Caco-2 (cell line): ENCODE measurements at regions of chr12 and their contacts with region 1.

Region 1: DNA sequence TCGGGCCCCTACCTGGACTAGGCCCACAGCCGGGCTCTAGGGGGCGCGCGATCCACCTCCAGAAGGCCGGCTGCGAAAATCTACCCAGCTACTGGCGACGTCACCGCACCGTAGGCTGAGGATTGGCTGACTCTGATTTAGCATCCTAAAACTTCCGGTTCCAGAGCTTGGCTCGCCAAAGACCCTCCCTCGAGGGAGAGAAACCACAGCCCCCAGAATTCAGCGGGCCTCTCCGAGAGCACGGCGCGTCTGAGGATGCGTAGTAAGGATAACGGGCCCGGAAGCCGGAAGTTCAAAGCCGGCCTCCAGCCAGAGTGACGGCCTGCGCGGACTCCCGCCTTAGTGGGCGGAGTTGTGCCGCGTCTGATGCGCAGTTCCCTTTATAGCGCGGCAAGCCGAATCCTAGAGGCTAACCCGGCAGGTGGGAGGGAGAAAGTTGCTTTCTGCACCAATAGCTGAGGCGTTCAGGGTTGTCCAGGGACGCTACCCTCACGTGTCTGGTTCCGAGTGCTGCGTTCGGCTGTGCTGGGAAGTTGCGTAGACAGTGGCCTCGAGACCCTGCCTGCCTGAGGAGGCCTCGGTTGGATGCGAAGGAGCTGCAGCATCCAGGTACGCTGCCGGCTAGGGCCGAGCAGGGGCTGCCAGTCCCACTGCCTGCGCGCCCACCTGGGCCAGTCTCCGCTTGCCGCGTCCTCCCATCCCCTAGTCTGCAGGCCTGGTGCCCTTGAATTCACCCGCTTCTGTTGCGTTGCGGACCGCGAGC is at the start of gene COX14:
- DNase-seq: peak; percentile 100
- H3K4me3 ChIP-seq: peak within 1 kb of the TSS; percentile 80
- H3K4me3 Mint-ChIP-seq: peak within 1 kb of the TSS; percentile 100
- H3K27ac Mint-ChIP-seq: peak within 1 kb of the TSS; percentile 97
- H3K4me1 ChIP-seq: peaks cover 24% of the 10 kb centered on the region
- H3K4me1 Mint-ChIP-seq: peaks cover 17% of the 10 kb centered on the region
- H3K27me3 ChIP-seq: no peaks in the 10 kb centered on the region
- H3K27me3 Mint-ChIP-seq: no peaks in the 10 kb centered on the region
- CTCF ChIP-seq: peak; percentile 94 to 97
- total RNA-seq, gene COX14: 85.0 and 86.3 TPM in 2 replicates

Region 2: GRCh38 chr12:49809381-49809905 is 302.4 kb before region 1 on chr12:
- CTCF ChIA-PET with region 1: no interaction called
- POLR2A ChIA-PET with region 1: no interaction called
- intact Hi-C with region 1: no loop called
- DNase-seq: no peak
- H3K4me3 ChIP-seq: no peak overlapping the region
- H3K4me3 Mint-ChIP-seq: no peak overlapping the region
- H3K27ac Mint-ChIP-seq: no peak overlapping the region
- H3K4me1 ChIP-seq: no peaks in the 10 kb centered on the region
- H3K4me1 Mint-ChIP-seq: no peaks in the 10 kb centered on the region
- H3K27me3 ChIP-seq: no peaks in the 10 kb centered on the region
- H3K27me3 Mint-ChIP-seq: no peaks in the 10 kb centered on the region
- CTCF ChIP-seq: no peak

Region 3: GRCh38 chr12:49967042-49967776 is 144.7 kb before region 1 on chr12:
- CTCF ChIA-PET with region 1: interaction called, 14 read pairs
- POLR2A ChIA-PET with region 1: no interaction called
- intact Hi-C with region 1: no loop called
- DNase-seq: peak; percentile 88 to 92
- H3K4me3 ChIP-seq: peak overlapping the region; percentile 18
- H3K4me3 Mint-ChIP-seq: peak overlapping the region; percentile 34
- H3K27ac Mint-ChIP-seq: peak overlapping the region; percentile 33
- H3K4me1 ChIP-seq: peaks cover 20% of the 10 kb centered on the region
- H3K4me1 Mint-ChIP-seq: no peaks in the 10 kb centered on the region
- H3K27me3 ChIP-seq: no peaks in the 10 kb centered on the region
- H3K27me3 Mint-ChIP-seq: no peaks in the 10 kb centered on the region
- CTCF ChIP-seq: peak; percentile 94 to 98

Region 4: GRCh38 chr12:50084775-50085614 is 26.9 kb before region 1 on chr12 and contains the start of gene SMARCD1:
- CTCF ChIA-PET with region 1: interaction called, 105 read pairs
- POLR2A ChIA-PET with region 1: interaction called, 30 read pairs
- intact Hi-C with region 1: loop called (anchors 1 kb)
- DNase-seq: peak; percentile 97
- H3K4me3 ChIP-seq: peak within 1 kb of the TSS; percentile 72
- H3K4me3 Mint-ChIP-seq: peak within 1 kb of the TSS; percentile 83
- H3K27ac Mint-ChIP-seq: peak within 1 kb of the TSS; percentile 79
- H3K4me1 ChIP-seq: peaks cover 44% of the 10 kb centered on the region
- H3K4me1 Mint-ChIP-seq: peaks cover 37% of the 10 kb centered on the region
- H3K27me3 ChIP-seq: no peaks in the 10 kb centered on the region
- H3K27me3 Mint-ChIP-seq: no peaks in the 10 kb centered on the region
- CTCF ChIP-seq: peak; percentile 12 to 87
- total RNA-seq, gene SMARCD1: 142 and 158 TPM in 2 replicates

Region 5: GRCh38 chr12:50132505-50133135 is 20.7 kb after region 1 on chr12:
- CTCF ChIA-PET with region 1: interaction called, 24 read pairs
- POLR2A ChIA-PET with region 1: interaction called, 12 read pairs
- intact Hi-C with region 1: no loop called
- DNase-seq: peak in 1 of 2 experiments; percentile 67
- H3K4me3 ChIP-seq: no peak overlapping the region
- H3K4me3 Mint-ChIP-seq: no peak overlapping the region
- H3K27ac Mint-ChIP-seq: peak overlapping the region; percentile 31
- H3K4me1 ChIP-seq: no peaks in the 10 kb centered on the region
- H3K4me1 Mint-ChIP-seq: no peaks in the 10 kb centered on the region
- H3K27me3 ChIP-seq: no peaks in the 10 kb centered on the region
- H3K27me3 Mint-ChIP-seq: no peaks in the 10 kb centered on the region
- CTCF ChIP-seq: peak; percentile 73 to 77

Region 6: GRCh38 chr12:50167041-50167828 is 55.4 kb after region 1 on chr12 and contains the start of gene CERS5:
- CTCF ChIA-PET with region 1: interaction called, 37 read pairs
- POLR2A ChIA-PET with region 1: interaction called, 20 read pairs
- intact Hi-C with region 1: loop called (anchors 1 kb)
- DNase-seq: peak; percentile 99 to 100
- H3K4me3 ChIP-seq: peak within 1 kb of the TSS; percentile 63
- H3K4me3 Mint-ChIP-seq: peak within 1 kb of the TSS; percentile 80
- H3K27ac Mint-ChIP-seq: peak within 1 kb of the TSS; percentile 77
- H3K4me1 ChIP-seq: peaks cover 11% of the 10 kb centered on the region; the same call in 1 of the 2 replicates
- H3K4me1 Mint-ChIP-seq: peaks cover 8% of the 10 kb centered on the region
- H3K27me3 ChIP-seq: no peaks in the 10 kb centered on the region
- H3K27me3 Mint-ChIP-seq: no peaks in the 10 kb centered on the region
- CTCF ChIP-seq: peak in 1 of 2 experiments; percentile 64
- total RNA-seq, gene CERS5: 61.6 and 62.6 TPM in 2 replicates

Region 7: DNA sequence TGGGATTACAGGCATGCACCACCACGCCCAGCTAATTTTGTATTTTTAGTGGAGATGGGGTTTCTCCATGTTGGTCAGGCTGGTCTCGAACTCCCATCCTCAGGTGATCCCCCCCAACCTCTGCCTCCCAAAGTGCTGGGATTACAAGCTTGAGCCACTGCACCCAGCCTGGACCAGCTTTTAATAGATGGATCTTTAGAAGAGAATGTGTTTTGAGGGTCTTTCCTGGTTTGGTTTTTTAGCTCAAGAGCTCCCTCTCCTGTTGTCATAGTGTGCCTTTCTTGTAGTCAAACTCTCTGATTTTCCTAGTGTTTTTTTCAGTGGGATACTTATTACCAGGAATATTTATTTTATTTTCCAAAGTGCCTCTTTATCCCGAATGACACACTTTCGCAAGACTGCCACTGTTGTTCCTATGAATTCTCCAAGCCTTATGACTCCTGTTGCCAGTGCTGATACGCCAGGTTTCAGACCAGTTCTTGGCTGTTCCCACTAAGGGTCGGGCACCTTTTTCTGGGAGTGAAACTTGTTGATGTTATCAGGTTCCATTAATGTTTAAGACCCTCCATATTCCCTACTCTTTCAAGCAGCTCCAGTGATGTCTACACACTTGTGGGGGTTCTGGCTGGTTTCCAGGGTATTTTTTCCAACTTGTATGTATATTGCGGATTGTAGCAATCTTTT is 202.9 kb after region 1 on chr12:
- CTCF ChIA-PET with region 1: interaction called, 13 read pairs
- POLR2A ChIA-PET with region 1: interaction called, 3 read pairs
- intact Hi-C with region 1: no loop called
- DNase-seq: peak in 1 of 2 experiments; percentile 56
- H3K4me3 ChIP-seq: no peak overlapping the region
- H3K4me3 Mint-ChIP-seq: no peak overlapping the region
- H3K27ac Mint-ChIP-seq: no peak overlapping the region
- H3K4me1 ChIP-seq: no peaks in the 10 kb centered on the region
- H3K4me1 Mint-ChIP-seq: no peaks in the 10 kb centered on the region
- H3K27me3 ChIP-seq: no peaks in the 10 kb centered on the region
- H3K27me3 Mint-ChIP-seq: no peaks in the 10 kb centered on the region
- CTCF ChIP-seq: peak; percentile 76 to 79